Prostate gland (tissue), 2 donors: ENCODE measurements at regions of chr4 and their contacts with region 1.

Region 1: GRCh38 chr4:168917138-168917779 is 92.8 kb downstream of the CBR4 start:
- DNase-seq: no peak
- H3K4me3 ChIP-seq: no peak overlapping the region
- H3K27ac ChIP-seq: peak overlapping the region in 1 of 2 donors; percentile 2
- H3K4me1 ChIP-seq: no peaks in the 10 kb centered on the region
- H3K27me3 ChIP-seq: no peaks in the 10 kb centered on the region
- CTCF ChIP-seq: peak; percentile 30 to 73 (median 68)
- POLR2A ChIP-seq: no peak

Region 2: GRCh38 chr4:168880811-168881595 is 36.3 kb before region 1 on chr4:
- intact Hi-C with region 1: loop called (anchors 5 kb)
- DNase-seq: no peak
- H3K4me3 ChIP-seq: no peak overlapping the region
- H3K27ac ChIP-seq: no peak overlapping the region
- H3K4me1 ChIP-seq: no peaks in the 10 kb centered on the region
- H3K27me3 ChIP-seq: no peaks in the 10 kb centered on the region
- CTCF ChIP-seq: no peak
- POLR2A ChIP-seq: no peak